PC-9 (cell line): ENCODE measurements at regions of chr9 and their contacts with region 1.

Region 1: DNA sequence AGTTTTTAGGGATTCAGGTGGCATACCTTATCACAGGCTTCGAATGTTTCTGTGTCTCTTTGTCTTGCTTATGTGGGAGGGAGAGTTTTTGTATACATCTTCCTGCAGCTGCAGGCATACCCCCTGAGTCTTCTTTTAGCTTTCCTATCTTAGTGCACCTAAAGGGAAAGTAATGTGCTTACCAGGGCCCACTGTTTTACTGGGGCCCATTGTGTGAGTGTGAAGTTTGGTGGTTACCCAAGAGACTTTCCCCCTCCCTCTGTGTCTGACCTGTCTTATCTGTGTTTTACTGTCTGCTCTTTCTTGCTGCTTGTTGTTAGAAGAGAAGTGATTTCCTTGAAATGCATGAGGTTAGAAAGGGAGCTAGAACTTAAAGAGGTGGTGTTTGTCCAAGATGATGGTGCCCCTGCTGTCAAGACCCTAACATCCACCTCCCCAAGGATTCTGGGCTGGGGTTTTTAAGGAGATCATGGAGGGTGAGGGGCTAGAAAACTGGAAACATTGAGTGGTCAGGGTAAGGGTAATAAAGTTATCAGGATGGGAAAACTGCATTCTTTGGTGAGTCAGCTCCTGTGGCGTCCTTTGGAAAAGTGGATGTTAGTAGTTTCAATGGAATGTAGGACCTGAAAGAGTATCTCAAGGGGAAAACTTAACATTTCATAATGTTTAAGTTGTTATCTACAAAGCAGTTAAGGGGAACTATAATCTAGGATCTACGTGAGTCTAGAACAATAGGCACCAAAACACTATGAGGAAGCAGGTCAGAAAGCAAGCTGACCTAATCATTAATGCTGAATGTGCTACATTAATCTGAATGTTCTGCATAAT is 583.5 kb upstream of the TUSC1 start:
- DNase-seq: peak; percentile 27 to 89
- H3K4me3 ChIP-seq: peak overlapping the region; percentile 21; the same call in 1 of the 2 replicates
- H3K27ac ChIP-seq: peak overlapping the region; percentile 91
- H3K4me1 ChIP-seq: peaks cover 81% of the 10 kb centered on the region
- H3K27me3 ChIP-seq: no peaks in the 10 kb centered on the region
- CTCF ChIP-seq: no peak

Region 2: GRCh38 chr9:26210338-26210851 is 51.3 kb before region 1 on chr9:
- CTCF ChIA-PET with region 1: no interaction called
- POLR2A ChIA-PET with region 1: no interaction called
- intact Hi-C with region 1: loop called (anchors 10 kb)
- DNase-seq: no peak
- H3K4me3 ChIP-seq: no peak overlapping the region
- H3K27ac ChIP-seq: no peak overlapping the region
- H3K4me1 ChIP-seq: no peaks in the 10 kb centered on the region
- H3K27me3 ChIP-seq: no peaks in the 10 kb centered on the region
- CTCF ChIP-seq: no peak

Region 3: GRCh38 chr9:26326473-26327044 is 64.8 kb after region 1 on chr9:
- CTCF ChIA-PET with region 1: no interaction called
- POLR2A ChIA-PET with region 1: no interaction called
- intact Hi-C with region 1: loop called (anchors 2 kb)
- DNase-seq: peak; percentile 28 to 42
- H3K4me3 ChIP-seq: no peak overlapping the region
- H3K27ac ChIP-seq: no peak overlapping the region
- H3K4me1 ChIP-seq: no peaks in the 10 kb centered on the region
- H3K27me3 ChIP-seq: no peaks in the 10 kb centered on the region
- CTCF ChIP-seq: peak; percentile 84

Region 4: GRCh38 chr9:26399556-26399955 is 137.8 kb after region 1 on chr9:
- CTCF ChIA-PET with region 1: no interaction called
- POLR2A ChIA-PET with region 1: no interaction called
- intact Hi-C with region 1: no loop called
- DNase-seq: no peak
- H3K4me3 ChIP-seq: no peak overlapping the region
- H3K27ac ChIP-seq: no peak overlapping the region
- H3K4me1 ChIP-seq: no peaks in the 10 kb centered on the region
- H3K27me3 ChIP-seq: no peaks in the 10 kb centered on the region
- CTCF ChIP-seq: no peak